Activated T-helper 1 cell treated with anti-CD3 and anti-CD28 coated beads, Interleukin-12 subunit alpha, Interleukin-12 subunit beta, Interleukin-2, Interleukin-4 antibody, amounts not matched to agents 30 ng/mL and 10 ng/mL and 1 ng/mL, durations not matched to agents 14 hours and 24 hours and 36 hours (primary cell): ENCODE measurements at regions of chr2 and their contacts with region 1.

Region 1: DNA sequence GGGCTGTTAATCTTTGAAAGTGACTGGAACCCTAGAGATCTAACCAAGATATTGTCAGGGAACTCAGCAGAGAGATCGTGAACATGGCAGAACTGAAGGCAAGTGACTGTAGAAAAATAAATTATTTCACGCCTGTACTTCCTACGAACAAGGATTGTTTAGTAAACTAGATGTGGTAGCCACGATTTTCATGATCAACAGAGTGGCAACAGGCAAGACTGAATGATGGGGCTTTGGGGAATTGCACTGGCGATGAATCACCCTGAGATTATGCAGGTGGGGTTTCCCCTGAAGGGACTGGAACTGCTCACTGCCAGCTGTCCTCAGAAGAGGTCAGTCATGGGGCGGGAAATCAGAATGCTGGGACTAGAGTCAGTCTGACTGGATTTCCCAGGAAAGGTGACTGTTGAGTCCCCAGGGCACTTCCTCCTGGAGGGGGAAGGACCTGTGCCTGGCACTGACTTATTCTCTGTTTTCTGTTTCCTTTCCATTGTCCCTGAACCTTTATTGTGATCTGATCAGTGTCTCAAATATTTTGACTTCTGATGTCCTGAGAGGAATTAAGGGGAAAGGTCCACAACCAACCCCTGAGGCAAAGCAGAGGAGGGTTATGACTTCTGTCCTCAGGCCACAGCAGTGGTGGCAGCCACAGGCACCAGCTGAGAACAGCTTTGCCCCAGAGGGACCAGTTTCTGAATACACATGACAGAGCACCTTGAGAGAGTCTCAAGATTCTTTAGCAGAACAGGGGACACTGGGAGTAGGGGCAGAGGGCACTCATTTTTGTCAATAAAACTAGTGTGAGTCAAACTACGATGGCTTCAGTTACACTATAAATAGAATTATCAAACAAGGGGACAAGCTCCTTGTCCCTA is 70.0 kb downstream of the NAB1 start:
- DNase-seq: peak; percentile 16
- H3K4me3 Mint-ChIP-seq: peak overlapping the region; percentile 43
- H3K27ac Mint-ChIP-seq: peak overlapping the region; percentile 81
- H3K4me1 Mint-ChIP-seq: peaks cover 64% of the 10 kb centered on the region
- H3K27me3 Mint-ChIP-seq: no peaks in the 10 kb centered on the region

Region 2: GRCh38 chr2:190137561-190137960 is 581.3 kb before region 1 on chr2:
- intact Hi-C with region 1: no loop called
- DNase-seq: no peak
- H3K4me3 Mint-ChIP-seq: no peak overlapping the region
- H3K27ac Mint-ChIP-seq: no peak overlapping the region
- H3K4me1 Mint-ChIP-seq: no peaks in the 10 kb centered on the region
- H3K27me3 Mint-ChIP-seq: peaks cover 3% of the 10 kb centered on the region

Region 3: DNA sequence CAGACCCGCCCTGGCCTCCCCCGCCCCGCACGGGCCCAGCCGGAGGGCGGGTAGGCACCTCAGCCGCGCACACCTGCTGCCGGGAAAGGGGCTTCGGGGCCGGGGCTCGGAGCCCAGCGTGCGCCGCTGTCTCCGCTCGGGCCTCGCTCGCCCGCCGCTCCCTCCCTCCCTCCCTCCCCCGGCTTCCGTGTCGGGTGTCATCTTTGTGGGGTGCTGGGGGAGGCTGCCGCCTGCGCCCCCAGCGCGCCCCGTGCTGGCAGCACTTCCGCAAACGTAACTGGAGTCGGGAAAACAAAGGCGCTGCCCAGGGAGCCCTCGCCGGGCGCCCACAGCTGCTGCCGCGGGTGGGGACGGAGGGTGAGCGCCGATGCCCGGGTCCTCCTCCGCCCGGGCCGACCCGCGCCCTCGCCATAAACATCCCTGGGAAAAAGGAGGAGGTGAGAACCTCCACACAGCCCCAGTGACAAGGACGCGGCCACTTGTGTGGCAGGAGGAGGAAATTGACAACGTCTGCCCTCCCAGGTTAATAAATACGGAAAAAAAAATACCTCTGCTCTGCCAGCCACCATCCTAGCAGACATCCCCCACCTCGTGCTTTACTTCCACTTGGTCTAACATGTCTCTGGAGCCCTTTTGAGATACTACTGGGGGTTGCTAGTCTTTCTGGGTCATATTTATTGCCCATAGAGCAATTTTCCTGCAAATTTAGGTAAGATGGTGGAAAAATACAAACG is 310.2 kb before region 1 on chr2:
- intact Hi-C with region 1: loop called (anchors 1 kb)
- DNase-seq: peak; percentile 66
- H3K4me3 Mint-ChIP-seq: peak overlapping the region; percentile 90
- H3K27ac Mint-ChIP-seq: peak overlapping the region; percentile 94
- H3K4me1 Mint-ChIP-seq: peaks cover 44% of the 10 kb centered on the region
- H3K27me3 Mint-ChIP-seq: no peaks in the 10 kb centered on the region

Region 4: GRCh38 chr2:190648289-190649034 is 70.4 kb before region 1 on chr2:
- intact Hi-C with region 1: loop called (anchors 1 kb)
- DNase-seq: peak; percentile 84
- H3K4me3 Mint-ChIP-seq: peak overlapping the region; percentile 78
- H3K27ac Mint-ChIP-seq: peak overlapping the region; percentile 82
- H3K4me1 Mint-ChIP-seq: peaks cover 48% of the 10 kb centered on the region
- H3K27me3 Mint-ChIP-seq: no peaks in the 10 kb centered on the region

Region 5: GRCh38 chr2:190695739-190696138 is 23.1 kb before region 1 on chr2:
- intact Hi-C with region 1: loop called (anchors 1 kb)
- DNase-seq: no peak
- H3K4me3 Mint-ChIP-seq: no peak overlapping the region
- H3K27ac Mint-ChIP-seq: peak overlapping the region; percentile 70
- H3K4me1 Mint-ChIP-seq: peaks cover 30% of the 10 kb centered on the region
- H3K27me3 Mint-ChIP-seq: no peaks in the 10 kb centered on the region

Region 6: DNA sequence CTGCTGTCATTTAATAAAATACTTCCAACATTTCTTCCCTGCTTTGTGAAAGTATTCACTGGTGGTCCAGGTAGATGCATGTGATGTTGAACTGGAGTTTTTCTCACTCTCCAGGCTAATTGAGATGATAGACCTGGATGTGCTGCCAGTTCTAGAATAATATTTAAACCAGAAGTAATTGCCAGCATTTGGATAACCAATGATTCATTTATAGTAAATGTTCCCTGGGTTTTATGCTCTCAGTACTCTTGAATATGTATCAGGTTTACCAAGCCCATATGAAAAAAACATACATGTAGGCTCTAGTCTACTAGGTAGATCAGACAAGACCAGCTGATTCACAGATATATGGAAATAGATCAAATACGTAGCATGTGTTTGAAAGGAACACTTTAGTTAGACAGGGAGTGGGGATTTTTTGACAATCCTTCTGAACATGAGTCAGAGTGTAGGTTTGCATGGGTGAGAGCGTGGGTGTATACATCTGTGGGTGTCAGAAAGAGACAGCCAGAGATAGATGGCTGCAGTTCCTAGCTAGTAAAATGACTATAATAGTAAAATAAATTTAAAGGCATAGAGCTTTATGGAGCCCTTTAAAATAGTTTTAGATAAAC is 45.1 kb after region 1 on chr2:
- intact Hi-C with region 1: loop called (anchors 1 kb)
- DNase-seq: no peak
- H3K4me3 Mint-ChIP-seq: peak overlapping the region; percentile 3
- H3K27ac Mint-ChIP-seq: peak overlapping the region; percentile 11
- H3K4me1 Mint-ChIP-seq: peaks cover 44% of the 10 kb centered on the region
- H3K27me3 Mint-ChIP-seq: no peaks in the 10 kb centered on the region

Region 7: DNA sequence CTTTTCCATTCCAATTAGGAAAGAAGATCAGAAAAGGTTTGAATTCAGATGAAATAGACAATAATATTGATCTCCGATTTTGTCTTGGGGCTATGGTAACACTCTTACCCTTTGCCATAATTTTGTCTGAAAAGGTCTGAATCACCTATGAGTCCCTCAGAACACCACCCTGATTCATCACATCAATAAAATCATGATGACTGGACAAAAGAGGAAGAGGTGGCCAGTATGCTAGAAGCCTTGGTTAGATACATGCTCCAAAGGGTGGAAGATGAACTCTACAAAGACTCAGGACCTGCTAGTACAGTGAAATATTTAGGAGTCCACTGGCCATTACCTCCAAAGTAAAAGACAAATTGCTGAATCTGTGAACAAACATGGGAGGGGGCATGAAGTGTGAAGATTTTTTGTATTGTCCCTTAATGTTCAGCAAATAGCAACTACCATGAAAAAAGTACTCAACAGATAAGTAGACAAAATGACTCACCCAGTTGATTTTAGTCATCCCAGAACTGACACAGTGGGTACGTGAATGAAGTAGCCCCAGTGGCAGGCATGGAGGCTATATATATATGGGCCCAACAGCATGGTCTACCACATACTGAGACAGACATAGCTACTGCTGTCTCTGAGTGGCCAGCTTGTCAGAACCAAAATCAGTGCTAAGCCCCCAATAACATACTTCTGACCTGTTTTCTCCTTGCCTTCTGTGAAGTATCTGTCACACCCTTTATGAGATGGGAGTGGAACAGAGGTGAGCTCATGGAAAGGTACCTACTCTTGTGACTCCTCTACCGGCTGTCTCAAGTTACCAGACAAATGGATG is 125.2 kb after region 1 on chr2:
- intact Hi-C with region 1: loop called (anchors 1 kb)
- DNase-seq: peak; percentile 17
- H3K4me3 Mint-ChIP-seq: peak overlapping the region; percentile 44
- H3K27ac Mint-ChIP-seq: peak overlapping the region; percentile 96
- H3K4me1 Mint-ChIP-seq: peaks cover 15% of the 10 kb centered on the region
- H3K27me3 Mint-ChIP-seq: no peaks in the 10 kb centered on the region

Region 8: DNA sequence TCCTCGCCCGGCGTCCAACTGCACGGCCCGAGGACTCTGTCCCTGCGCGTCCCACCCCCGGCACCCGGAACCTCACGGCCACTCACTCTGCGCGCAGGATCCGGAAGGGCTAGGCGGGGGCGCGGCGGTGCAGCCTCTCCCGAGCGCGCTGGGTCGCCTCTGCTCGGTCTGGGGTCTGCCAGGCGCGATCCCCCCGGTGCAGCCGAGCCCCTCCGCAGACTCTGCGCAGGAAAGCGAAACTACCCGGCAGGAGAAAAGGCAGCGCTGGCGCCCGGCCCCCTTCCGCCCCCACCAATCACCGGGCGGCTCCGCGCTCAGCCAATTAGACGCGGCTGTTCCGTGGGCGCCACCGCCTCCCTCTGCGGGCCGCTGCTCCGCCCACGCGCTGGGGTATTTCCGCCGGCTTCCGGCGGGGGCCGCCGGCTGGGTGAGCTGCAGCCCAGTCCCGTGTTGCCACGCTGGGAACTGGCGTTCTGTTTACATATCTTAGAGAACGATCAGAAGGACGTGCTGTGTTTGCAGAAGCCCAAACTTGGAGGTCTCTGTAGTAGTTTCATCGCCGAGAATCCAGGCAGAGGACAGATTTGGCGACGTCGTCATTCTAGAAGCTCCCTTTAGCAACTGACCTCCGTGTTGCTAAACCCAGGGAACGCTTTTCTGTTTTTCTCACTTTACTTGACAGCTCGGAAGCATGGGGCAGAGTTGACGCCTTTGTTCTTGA is 295.2 kb after region 1 on chr2 and contains the start of gene STAT1:
- intact Hi-C with region 1: loop called (anchors 2 kb)
- DNase-seq: peak; percentile 97
- H3K4me3 Mint-ChIP-seq: no peak within 1 kb of the TSS
- H3K27ac Mint-ChIP-seq: no peak within 1 kb of the TSS
- H3K4me1 Mint-ChIP-seq: peaks cover 49% of the 10 kb centered on the region
- H3K27me3 Mint-ChIP-seq: no peaks in the 10 kb centered on the region
- total RNA-seq, gene STAT1: 129 and 136 TPM in 2 replicates

Region 9: DNA sequence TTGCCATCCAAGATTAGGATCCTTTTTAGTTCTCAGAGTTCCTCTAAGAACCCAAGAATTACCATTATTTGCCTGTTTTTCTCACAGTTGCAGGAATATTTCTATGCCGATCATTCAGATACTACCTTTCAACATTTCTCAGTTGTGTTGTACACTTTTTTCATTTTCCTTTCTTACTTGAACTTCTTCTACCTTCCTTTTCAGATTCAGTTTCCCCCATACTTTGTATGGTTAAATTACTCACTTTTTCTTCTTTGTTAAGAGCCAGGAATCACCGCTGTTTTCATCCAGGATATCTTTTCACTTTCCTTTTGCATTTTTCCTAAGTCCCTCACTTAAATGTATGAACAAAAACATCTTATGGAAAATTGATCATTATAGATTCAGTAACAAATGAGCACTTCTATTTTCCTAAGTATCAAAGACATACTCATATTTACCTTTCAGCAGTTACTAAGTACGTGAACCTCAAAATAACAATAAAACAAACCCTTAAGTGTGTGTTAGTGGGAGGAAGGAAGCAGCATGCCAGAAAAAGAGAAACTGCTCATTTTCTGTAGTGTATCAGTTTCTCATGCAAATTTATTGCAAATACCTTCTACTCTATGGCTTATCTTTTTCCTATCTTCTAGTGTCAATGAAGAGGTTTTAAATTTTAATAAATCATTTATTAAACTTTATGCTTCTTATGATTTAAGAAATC is 359.4 kb after region 1 on chr2:
- intact Hi-C with region 1: no loop called
- DNase-seq: no peak
- H3K4me3 Mint-ChIP-seq: peak overlapping the region; percentile 60
- H3K27ac Mint-ChIP-seq: peak overlapping the region; percentile 89
- H3K4me1 Mint-ChIP-seq: peaks cover 31% of the 10 kb centered on the region
- H3K27me3 Mint-ChIP-seq: no peaks in the 10 kb centered on the region